B cell (primary cell): ENCODE measurements at regions of chr7 and their contacts with region 1.

Region 1: DNA sequence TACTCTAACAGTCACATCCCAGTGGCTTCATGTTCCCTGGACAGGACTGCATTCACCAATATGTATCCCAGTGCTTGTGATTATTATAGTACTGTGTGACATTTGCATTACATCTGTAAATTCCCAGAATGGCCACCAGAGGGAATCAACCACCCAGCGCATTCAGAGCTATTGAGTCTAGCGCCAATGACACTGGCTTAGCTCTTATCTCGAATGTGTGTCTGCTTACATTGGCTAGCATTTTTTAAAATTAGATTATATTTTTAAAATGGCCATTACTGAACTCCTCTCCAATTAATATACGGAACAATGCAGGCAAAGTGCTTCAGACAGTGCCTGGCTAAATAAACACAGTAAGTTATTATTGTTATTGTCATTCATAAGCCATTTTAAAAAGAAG is 36.3 kb downstream of the TRIL start:
- DNase-seq: peak; percentile 61
- ATAC-seq: peak; percentile 90
- H3K4me3 ChIP-seq: no peak overlapping the region
- H3K4me3 Mint-ChIP-seq: no peak overlapping the region
- H3K27ac ChIP-seq: no peak overlapping the region
- H3K27ac Mint-ChIP-seq: no peak overlapping the region
- H3K4me1 ChIP-seq: peaks cover 4 to 16% of the 10 kb centered on the region in 2 donors
- H3K4me1 Mint-ChIP-seq: peaks cover 15% of the 10 kb centered on the region
- H3K27me3 ChIP-seq: no peaks in the 10 kb centered on the region
- H3K27me3 Mint-ChIP-seq: peaks cover 3% of the 10 kb centered on the region
- CTCF ChIP-seq: peak; percentile 76

Region 2: GRCh38 chr7:27409776-27410175 is 1512.0 kb before region 1 on chr7:
- CTCF ChIA-PET with region 1: no interaction called
- POLR2A ChIA-PET with region 1: no interaction called
- intact Hi-C with region 1: no loop called
- DNase-seq: no peak
- ATAC-seq: no peak
- H3K4me3 ChIP-seq: no peak overlapping the region
- H3K4me3 Mint-ChIP-seq: no peak overlapping the region
- H3K27ac ChIP-seq: no peak overlapping the region
- H3K27ac Mint-ChIP-seq: no peak overlapping the region
- H3K4me1 ChIP-seq: no peaks in the 10 kb centered on the region
- H3K4me1 Mint-ChIP-seq: no peaks in the 10 kb centered on the region
- H3K27me3 ChIP-seq: peaks cover 0 to 4% (median 0%) of the 10 kb centered on the region in 4 experiments
- H3K27me3 Mint-ChIP-seq: peaks cover 20% of the 10 kb centered on the region
- CTCF ChIP-seq: no peak

Region 3: DNA sequence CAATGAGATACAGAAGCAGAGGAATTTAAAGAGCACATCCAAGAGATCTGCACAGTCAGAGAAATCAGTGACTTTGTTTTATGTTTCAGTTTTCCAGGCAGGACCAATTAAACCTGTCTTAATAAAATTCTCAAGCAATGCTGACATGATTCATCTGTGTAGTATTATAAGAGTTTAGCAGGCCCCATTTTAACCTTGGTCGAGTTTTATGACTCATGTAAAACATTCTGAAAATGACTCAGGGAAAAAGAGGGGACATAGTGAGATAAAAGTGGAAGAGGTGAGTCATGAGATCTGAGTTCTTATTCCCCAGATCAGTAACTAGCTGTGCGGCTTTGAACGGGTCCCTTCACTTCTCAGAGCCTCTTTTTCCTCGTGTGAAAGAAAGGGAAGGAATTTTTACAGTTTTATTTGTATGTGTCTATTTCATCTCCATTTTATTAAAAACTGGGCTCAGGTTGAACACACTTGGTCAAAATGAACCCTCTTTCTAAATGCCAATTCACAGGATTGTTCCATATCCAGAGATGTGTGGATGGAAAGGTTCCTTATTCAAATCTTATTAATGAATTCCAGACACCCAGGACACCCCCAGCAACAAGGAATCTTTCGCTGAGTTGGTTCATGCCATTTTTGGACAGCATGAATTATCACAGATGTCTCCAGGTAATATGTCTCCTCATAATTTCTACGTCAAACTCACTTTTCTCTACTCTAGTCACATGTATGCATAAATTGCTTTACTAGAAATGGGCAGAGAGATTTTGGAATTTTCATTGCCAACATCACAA is 884.4 kb before region 1 on chr7:
- CTCF ChIA-PET with region 1: no interaction called
- POLR2A ChIA-PET with region 1: no interaction called
- intact Hi-C with region 1: no loop called
- DNase-seq: no peak
- ATAC-seq: peak; percentile 43
- H3K4me3 ChIP-seq: no peak overlapping the region
- H3K4me3 Mint-ChIP-seq: no peak overlapping the region
- H3K27ac ChIP-seq: no peak overlapping the region
- H3K27ac Mint-ChIP-seq: no peak overlapping the region
- H3K4me1 ChIP-seq: peaks cover 6 to 11% of the 10 kb centered on the region in 2 donors
- H3K4me1 Mint-ChIP-seq: peaks cover 37% of the 10 kb centered on the region
- H3K27me3 ChIP-seq: no peaks in the 10 kb centered on the region
- H3K27me3 Mint-ChIP-seq: no peaks in the 10 kb centered on the region
- CTCF ChIP-seq: no peak

Region 4: GRCh38 chr7:28955718-28956619 is 34.1 kb after region 1 on chr7:
- CTCF ChIA-PET with region 1: interaction called, 21 read pairs
- POLR2A ChIA-PET with region 1: no interaction called
- intact Hi-C with region 1: no loop called
- DNase-seq: peak; percentile 37
- ATAC-seq: no peak
- H3K4me3 ChIP-seq: peak overlapping the region in 4 of 5 experiments; percentile 13 to 39 (median 32)
- H3K4me3 Mint-ChIP-seq: peak overlapping the region; percentile 53
- H3K27ac ChIP-seq: no peak overlapping the region
- H3K27ac Mint-ChIP-seq: no peak overlapping the region
- H3K4me1 ChIP-seq: peaks cover 22 to 29% of the 10 kb centered on the region in 2 donors
- H3K4me1 Mint-ChIP-seq: peaks cover 19% of the 10 kb centered on the region
- H3K27me3 ChIP-seq: peaks cover 0 to 50% (median 25%) of the 10 kb centered on the region in 4 experiments
- H3K27me3 Mint-ChIP-seq: peaks cover 68% of the 10 kb centered on the region
- CTCF ChIP-seq: peak; percentile 37

Region 5: DNA sequence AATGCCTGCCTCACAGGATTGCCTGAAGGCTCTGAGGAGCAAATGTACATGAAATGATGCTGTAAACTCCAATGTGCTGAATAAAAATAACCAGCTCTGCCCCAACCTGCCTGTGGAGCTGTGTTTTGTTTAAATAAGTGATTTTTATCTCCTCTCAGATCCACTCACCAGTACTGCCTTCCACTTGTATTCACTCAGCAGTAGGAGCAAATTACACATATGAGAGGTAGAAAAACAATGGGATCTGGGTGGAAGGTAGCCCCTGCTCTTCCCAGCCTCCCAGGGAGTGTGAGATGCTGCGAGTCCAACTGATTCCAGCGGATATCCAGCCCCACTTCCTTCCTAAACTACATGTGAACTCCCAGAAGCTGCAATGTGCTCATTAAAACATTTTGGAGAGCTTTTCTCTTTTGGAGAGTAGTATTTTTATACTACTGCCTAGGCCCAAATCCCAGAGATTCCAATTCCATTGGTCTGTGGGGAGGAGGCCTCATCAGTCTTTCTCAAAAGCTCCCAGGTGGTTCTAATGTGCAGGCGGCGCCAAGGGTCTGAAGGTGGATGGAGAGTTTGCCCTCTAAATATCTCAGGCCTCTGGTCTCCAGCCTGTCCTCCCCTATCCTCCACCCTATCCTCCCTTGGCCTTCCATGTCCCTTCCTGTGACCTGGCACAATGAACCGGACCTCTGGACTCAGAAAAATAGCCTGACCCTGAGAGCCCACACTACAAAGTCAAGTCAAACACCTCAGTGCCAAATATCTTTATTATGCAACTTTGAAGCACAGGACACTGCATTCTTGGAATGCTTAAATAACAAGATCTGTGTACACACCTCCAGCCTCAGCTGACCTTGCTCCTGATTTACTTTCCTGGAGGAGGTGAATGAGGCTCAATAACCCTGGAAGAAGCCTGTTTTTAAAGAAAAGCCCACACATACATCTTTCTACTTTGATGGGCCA is 178.3 kb after region 1 on chr7:
- CTCF ChIA-PET with region 1: interaction called, 13 read pairs
- POLR2A ChIA-PET with region 1: no interaction called
- intact Hi-C with region 1: loop called (anchors 1 kb)
- DNase-seq: no peak
- ATAC-seq: no peak
- H3K4me3 ChIP-seq: no peak overlapping the region
- H3K4me3 Mint-ChIP-seq: no peak overlapping the region
- H3K27ac ChIP-seq: no peak overlapping the region
- H3K27ac Mint-ChIP-seq: no peak overlapping the region
- H3K4me1 ChIP-seq: no peaks in the 10 kb centered on the region
- H3K4me1 Mint-ChIP-seq: peaks cover 3% of the 10 kb centered on the region
- H3K27me3 ChIP-seq: no peaks in the 10 kb centered on the region
- H3K27me3 Mint-ChIP-seq: peaks cover 18% of the 10 kb centered on the region
- CTCF ChIP-seq: no peak

Region 6: DNA sequence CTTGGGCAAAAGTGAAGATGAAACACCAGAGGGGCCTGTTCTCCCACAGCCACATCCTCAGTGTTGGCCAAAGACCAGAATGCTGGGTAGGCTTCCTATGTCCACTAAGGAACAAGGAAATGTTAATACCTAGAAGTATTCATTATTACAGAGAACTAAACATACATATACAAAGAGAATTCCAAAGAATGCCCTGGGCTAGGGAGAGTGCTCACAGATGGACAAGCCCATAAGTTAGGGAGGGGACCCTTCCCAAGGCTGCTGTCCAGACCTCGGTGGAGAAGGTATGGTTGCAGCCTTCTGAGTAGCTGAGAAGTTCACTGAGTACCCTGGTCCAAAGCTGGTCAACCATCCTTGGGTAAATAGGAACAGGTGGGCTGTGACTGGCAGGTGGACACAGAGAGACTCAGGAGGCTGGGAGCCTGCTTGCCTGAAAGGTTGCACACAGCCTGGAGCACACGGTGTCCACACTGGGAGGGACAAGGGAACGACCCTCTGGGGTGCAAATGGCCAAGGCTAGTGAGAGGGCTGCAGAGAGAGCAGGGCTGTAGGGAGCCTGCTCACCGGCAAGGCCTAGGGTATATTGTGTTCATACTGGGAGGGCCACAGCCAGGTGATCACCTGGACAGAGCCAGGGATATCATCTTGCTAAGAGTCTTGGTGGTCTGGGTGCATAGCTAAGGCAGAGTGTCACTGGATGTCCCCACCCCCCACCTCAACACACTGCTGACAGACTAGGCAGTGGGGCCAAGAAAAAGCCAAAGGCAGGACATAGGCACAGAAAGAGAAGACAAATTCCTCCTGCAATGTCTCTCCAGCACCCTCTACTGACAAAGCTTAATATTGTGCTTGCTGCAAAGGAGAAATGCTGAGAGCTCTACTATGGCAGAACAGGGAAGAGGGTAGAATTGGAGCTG is 184.2 kb after region 1 on chr7:
- CTCF ChIA-PET with region 1: interaction called, 13 read pairs
- POLR2A ChIA-PET with region 1: no interaction called
- intact Hi-C with region 1: loop called (anchors 1 kb)
- DNase-seq: peak; percentile 36
- ATAC-seq: peak; percentile 39
- H3K4me3 ChIP-seq: no peak overlapping the region
- H3K4me3 Mint-ChIP-seq: no peak overlapping the region
- H3K27ac ChIP-seq: no peak overlapping the region
- H3K27ac Mint-ChIP-seq: no peak overlapping the region
- H3K4me1 ChIP-seq: peaks cover 0 to 4% of the 10 kb centered on the region in 2 donors
- H3K4me1 Mint-ChIP-seq: peaks cover 3% of the 10 kb centered on the region
- H3K27me3 ChIP-seq: no peaks in the 10 kb centered on the region
- H3K27me3 Mint-ChIP-seq: peaks cover 21% of the 10 kb centered on the region
- CTCF ChIP-seq: peak; percentile 61

Region 7: GRCh38 chr7:29158795-29159423 is 237.1 kb after region 1 on chr7:
- CTCF ChIA-PET with region 1: no interaction called
- POLR2A ChIA-PET with region 1: no interaction called
- intact Hi-C with region 1: no loop called
- DNase-seq: no peak
- ATAC-seq: no peak
- H3K4me3 ChIP-seq: no peak overlapping the region
- H3K4me3 Mint-ChIP-seq: no peak overlapping the region
- H3K27ac ChIP-seq: no peak overlapping the region
- H3K27ac Mint-ChIP-seq: no peak overlapping the region
- H3K4me1 ChIP-seq: no peaks in the 10 kb centered on the region
- H3K4me1 Mint-ChIP-seq: no peaks in the 10 kb centered on the region
- H3K27me3 ChIP-seq: peaks cover 0 to 10% (median 8%) of the 10 kb centered on the region in 4 experiments
- H3K27me3 Mint-ChIP-seq: peaks cover 38% of the 10 kb centered on the region
- CTCF ChIP-seq: no peak

Region 8: GRCh38 chr7:29189743-29190201 is 267.9 kb after region 1 on chr7:
- CTCF ChIA-PET with region 1: interaction called, 9 read pairs
- POLR2A ChIA-PET with region 1: no interaction called
- intact Hi-C with region 1: loop called (anchors 5 kb)
- DNase-seq: peak; percentile 54
- ATAC-seq: no peak
- H3K4me3 ChIP-seq: no peak overlapping the region
- H3K4me3 Mint-ChIP-seq: no peak overlapping the region
- H3K27ac ChIP-seq: no peak overlapping the region
- H3K27ac Mint-ChIP-seq: no peak overlapping the region
- H3K4me1 ChIP-seq: peaks cover 5 to 7% of the 10 kb centered on the region in 2 donors
- H3K4me1 Mint-ChIP-seq: no peaks in the 10 kb centered on the region
- H3K27me3 ChIP-seq: peaks cover 0 to 14% (median 5%) of the 10 kb centered on the region in 4 experiments
- H3K27me3 Mint-ChIP-seq: peaks cover 35% of the 10 kb centered on the region
- CTCF ChIP-seq: peak; percentile 75

Region 9: DNA sequence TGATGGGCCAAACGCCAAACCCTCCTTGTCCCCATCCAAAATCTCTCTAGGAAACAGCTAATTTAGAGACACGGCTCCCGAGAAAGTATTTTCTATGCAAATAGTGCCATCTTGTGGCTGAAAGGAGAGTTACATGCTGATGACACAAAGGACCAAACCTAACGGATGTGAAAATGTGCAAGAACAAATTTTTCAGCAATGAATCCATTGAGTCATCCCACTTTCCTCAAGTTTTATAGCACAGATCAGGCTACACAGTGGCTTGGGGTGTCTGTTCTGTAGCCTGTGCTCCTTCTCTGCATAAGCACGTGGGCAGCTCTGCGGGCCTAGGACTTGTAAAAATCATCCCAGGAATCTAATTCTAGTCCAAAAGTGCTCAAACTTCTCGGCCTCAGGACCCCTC is 487.0 kb after region 1 on chr7:
- CTCF ChIA-PET with region 1: interaction called, 304 read pairs
- POLR2A ChIA-PET with region 1: no interaction called
- intact Hi-C with region 1: loop called (anchors 1 kb)
- DNase-seq: peak; percentile 70
- ATAC-seq: peak; percentile 28
- H3K4me3 ChIP-seq: no peak overlapping the region
- H3K4me3 Mint-ChIP-seq: no peak overlapping the region
- H3K27ac ChIP-seq: no peak overlapping the region
- H3K27ac Mint-ChIP-seq: no peak overlapping the region
- H3K4me1 ChIP-seq: no peaks in the 10 kb centered on the region
- H3K4me1 Mint-ChIP-seq: no peaks in the 10 kb centered on the region
- H3K27me3 ChIP-seq: peaks cover 0 to 2% (median 0%) of the 10 kb centered on the region in 4 experiments
- H3K27me3 Mint-ChIP-seq: peaks cover 19% of the 10 kb centered on the region
- CTCF ChIP-seq: peak; percentile 96

Region 10: DNA sequence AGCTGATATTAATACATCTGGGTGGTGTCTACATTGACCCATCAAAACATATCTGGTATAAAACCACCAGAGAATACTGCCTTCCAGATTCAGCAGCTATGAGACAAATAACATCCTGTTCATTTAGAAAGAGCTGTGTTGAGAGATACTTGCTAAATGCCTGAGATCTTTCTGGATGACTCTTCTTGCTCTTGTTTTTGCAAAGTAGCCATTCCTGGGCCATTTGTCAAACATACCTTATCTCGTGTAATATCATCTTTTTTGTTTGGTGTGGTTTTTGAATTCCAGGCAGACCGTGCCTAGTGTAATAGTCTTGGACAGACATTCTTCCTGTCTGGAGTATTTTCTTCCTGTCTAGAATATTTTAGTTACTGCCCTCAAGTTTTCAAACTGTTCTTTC is 567.2 kb after region 1 on chr7:
- CTCF ChIA-PET with region 1: no interaction called
- POLR2A ChIA-PET with region 1: no interaction called
- intact Hi-C with region 1: no loop called
- DNase-seq: no peak
- ATAC-seq: no peak
- H3K4me3 ChIP-seq: no peak overlapping the region
- H3K4me3 Mint-ChIP-seq: no peak overlapping the region
- H3K27ac ChIP-seq: no peak overlapping the region
- H3K27ac Mint-ChIP-seq: no peak overlapping the region
- H3K4me1 ChIP-seq: no peaks in the 10 kb centered on the region
- H3K4me1 Mint-ChIP-seq: no peaks in the 10 kb centered on the region
- H3K27me3 ChIP-seq: no peaks in the 10 kb centered on the region
- H3K27me3 Mint-ChIP-seq: peaks cover 5% of the 10 kb centered on the region
- CTCF ChIP-seq: no peak